Activated CD8-positive, alpha-beta T cell treated with anti-CD3 and anti-CD28 coated beads for 36 hours (primary cell): ENCODE measurements at regions of chr15 and their contacts with region 1.

Region 1: GRCh38 chr15:72312605-72313447 is 7.1 kb downstream of the CELF6 start:
- DNase-seq: peak; percentile 73
- ATAC-seq: peak; percentile 98
- H3K4me3 Mint-ChIP-seq: no peak overlapping the region
- H3K27ac Mint-ChIP-seq: no peak overlapping the region
- H3K4me1 Mint-ChIP-seq: no peaks in the 10 kb centered on the region
- H3K27me3 Mint-ChIP-seq: no peaks in the 10 kb centered on the region
- CTCF ChIP-seq: peak; percentile 90

Region 2: GRCh38 chr15:72323752-72324151 is 10.9 kb after region 1 on chr15:
- CTCF ChIA-PET with region 1: interaction called, 12 read pairs
- POLR2A ChIA-PET with region 1: interaction called, 3 read pairs
- intact Hi-C with region 1: no loop called
- DNase-seq: no peak
- ATAC-seq: no peak
- H3K4me3 Mint-ChIP-seq: no peak overlapping the region
- H3K27ac Mint-ChIP-seq: no peak overlapping the region
- H3K4me1 Mint-ChIP-seq: peaks cover 8% of the 10 kb centered on the region
- H3K27me3 Mint-ChIP-seq: peaks cover 8% of the 10 kb centered on the region
- CTCF ChIP-seq: no peak

Region 3: GRCh38 chr15:72331021-72331420 is 18.2 kb after region 1 on chr15:
- CTCF ChIA-PET with region 1: interaction called, 10 read pairs
- POLR2A ChIA-PET with region 1: interaction called, 3 read pairs
- intact Hi-C with region 1: no loop called
- DNase-seq: no peak
- ATAC-seq: no peak
- H3K4me3 Mint-ChIP-seq: no peak overlapping the region
- H3K27ac Mint-ChIP-seq: no peak overlapping the region
- H3K4me1 Mint-ChIP-seq: no peaks in the 10 kb centered on the region
- H3K27me3 Mint-ChIP-seq: no peaks in the 10 kb centered on the region
- CTCF ChIP-seq: no peak

Region 4: GRCh38 chr15:72451224-72451623 is 138.4 kb after region 1 on chr15:
- CTCF ChIA-PET with region 1: no interaction called
- POLR2A ChIA-PET with region 1: no interaction called
- intact Hi-C with region 1: no loop called
- DNase-seq: no peak
- ATAC-seq: no peak
- H3K4me3 Mint-ChIP-seq: no peak overlapping the region
- H3K27ac Mint-ChIP-seq: no peak overlapping the region
- H3K4me1 Mint-ChIP-seq: no peaks in the 10 kb centered on the region
- H3K27me3 Mint-ChIP-seq: peaks cover 3% of the 10 kb centered on the region
- CTCF ChIP-seq: no peak